Activated CD4-positive, alpha-beta T cell treated with anti-CD3 and anti-CD28 coated beads, Interleukin-2, amount 10 ng/mL, durations not matched to agents 7 days and 5 days (primary cell): ENCODE measurements at regions of chr12 and their contacts with region 1.

Region 1: GRCh38 chr12:110600254-110600653 is 13.7 kb upstream of the TCTN1 start:
- DNase-seq: no peak
- H3K4me3 Mint-ChIP-seq: no peak overlapping the region
- H3K27ac Mint-ChIP-seq: no peak overlapping the region
- H3K4me1 Mint-ChIP-seq: peaks cover 16% of the 10 kb centered on the region
- H3K27me3 Mint-ChIP-seq: no peaks in the 10 kb centered on the region

Region 2: DNA sequence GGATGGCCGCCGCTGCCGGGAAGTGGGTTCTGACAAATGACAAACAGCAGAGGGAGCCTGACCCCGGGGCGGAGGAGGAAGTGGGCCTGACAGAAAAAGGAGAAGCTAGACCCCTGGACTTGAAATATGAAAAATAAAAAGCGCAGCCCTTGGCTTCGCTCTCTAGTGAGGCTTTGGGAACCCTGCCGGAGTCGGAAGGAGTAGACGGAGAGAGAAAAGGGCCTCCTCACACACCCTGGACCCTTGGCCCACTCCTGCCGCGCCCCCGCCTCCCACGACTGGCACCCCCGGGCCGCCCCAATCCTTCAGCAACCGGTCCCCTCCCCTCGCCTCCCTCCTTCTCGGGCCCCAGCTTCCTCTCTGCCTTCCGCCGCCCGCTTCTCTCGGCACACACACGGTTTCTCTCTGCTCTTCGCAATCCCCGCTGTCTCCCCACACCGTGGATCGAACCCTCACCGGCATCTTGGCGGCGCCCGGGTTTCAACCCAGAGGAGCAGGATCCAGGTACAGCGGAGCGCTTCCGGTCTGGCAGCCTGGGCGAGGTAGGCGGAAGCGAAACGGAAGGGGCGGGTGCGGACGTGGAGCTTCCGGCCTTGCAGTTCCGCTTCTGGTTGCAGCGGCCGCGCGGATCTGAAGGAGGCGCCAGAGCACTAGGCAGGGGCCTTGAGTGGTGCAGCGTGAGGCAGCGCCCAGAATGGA is 150.3 kb before region 1 on chr12 and contains the start of gene ARPC3:
- CTCF ChIA-PET with region 1: interaction called, 68 read pairs
- POLR2A ChIA-PET with region 1: interaction called, 7 read pairs
- DNase-seq: peak; percentile 97
- H3K4me3 Mint-ChIP-seq: peak within 1 kb of the TSS; percentile 100
- H3K27ac Mint-ChIP-seq: peak within 1 kb of the TSS; percentile 100
- H3K4me1 Mint-ChIP-seq: peaks cover 49% of the 10 kb centered on the region
- H3K27me3 Mint-ChIP-seq: no peaks in the 10 kb centered on the region
- total RNA-seq, gene ARPC3: 390 to 425 TPM

Region 3: GRCh38 chr12:110508071-110508586 is 92.1 kb before region 1 on chr12:
- CTCF ChIA-PET with region 1: interaction called, 15 read pairs
- POLR2A ChIA-PET with region 1: no interaction called
- DNase-seq: no peak
- H3K4me3 Mint-ChIP-seq: no peak overlapping the region
- H3K27ac Mint-ChIP-seq: no peak overlapping the region
- H3K4me1 Mint-ChIP-seq: peaks cover 4% of the 10 kb centered on the region
- H3K27me3 Mint-ChIP-seq: no peaks in the 10 kb centered on the region

Region 4: DNA sequence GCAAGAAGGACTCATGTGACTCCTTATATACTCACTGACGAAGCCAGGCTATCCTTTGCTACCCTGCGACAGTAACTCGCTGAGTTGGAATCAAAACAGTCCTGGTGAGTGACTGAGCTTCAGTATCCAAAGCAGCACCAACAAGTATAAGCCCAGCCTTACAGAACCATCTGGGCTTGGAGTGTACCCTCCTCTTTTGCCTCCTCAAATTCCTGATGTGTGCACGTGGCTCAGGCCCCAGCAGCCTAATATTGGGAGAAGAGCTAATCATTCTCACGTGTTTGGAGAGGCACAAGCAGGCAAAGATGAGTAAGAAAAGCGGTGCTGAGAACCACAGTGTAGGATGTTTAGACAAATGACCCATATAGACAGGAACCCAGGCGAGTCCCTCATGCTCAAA is 51.6 kb before region 1 on chr12:
- CTCF ChIA-PET with region 1: interaction called, 34 read pairs
- POLR2A ChIA-PET with region 1: no interaction called
- DNase-seq: no peak
- H3K4me3 Mint-ChIP-seq: no peak overlapping the region
- H3K27ac Mint-ChIP-seq: no peak overlapping the region
- H3K4me1 Mint-ChIP-seq: peaks cover 37% of the 10 kb centered on the region
- H3K27me3 Mint-ChIP-seq: no peaks in the 10 kb centered on the region

Region 5: DNA sequence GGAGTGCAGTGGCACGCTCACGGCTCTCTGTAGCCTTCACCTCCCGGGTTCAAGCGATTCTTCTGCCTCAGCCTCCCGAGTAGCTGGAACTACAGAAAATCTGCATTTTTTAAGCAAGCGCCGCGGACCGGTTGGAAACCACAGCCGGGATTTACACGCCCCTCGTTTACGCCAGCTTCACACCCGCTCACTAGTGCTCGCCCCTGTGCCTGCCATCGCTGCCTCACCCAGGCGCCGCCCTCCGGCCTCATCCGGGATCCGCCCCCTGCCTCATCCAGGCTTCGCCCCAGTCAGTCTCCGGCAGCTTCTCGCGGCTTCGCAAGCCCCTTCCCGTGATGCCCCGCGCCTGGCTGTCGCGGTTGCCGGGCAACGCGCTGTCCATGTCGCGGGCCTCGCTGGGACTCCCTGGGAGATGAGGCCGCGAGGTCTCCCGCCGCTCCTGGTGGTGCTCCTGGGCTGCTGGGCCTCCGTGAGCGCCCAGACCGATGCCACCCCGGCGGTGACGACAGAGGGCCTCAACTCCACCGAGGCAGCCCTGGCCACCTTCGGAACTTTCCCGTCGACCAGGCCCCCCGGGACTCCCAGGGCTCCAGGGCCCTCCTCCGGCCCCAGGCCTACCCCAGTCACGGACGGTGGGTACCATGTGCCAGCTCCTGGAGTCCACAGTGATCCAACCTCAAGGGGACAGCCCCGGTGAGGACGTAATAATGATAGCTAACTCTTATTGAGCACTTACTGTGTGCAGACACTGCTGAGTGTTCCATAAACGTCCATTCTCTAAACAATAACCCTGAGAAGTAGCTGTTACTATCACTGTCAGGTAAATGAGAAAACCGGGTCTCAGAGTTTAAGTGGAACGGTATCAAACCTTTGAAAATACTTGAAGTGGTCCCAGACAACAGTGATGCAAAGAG is 13.8 kb after region 1 on chr12 and contains the start of gene TCTN1:
- CTCF ChIA-PET with region 1: interaction called, 14 read pairs
- POLR2A ChIA-PET with region 1: interaction called, 3 read pairs
- DNase-seq: peak; percentile 98
- H3K4me3 Mint-ChIP-seq: peak within 1 kb of the TSS; percentile 83
- H3K27ac Mint-ChIP-seq: peak within 1 kb of the TSS; percentile 93
- H3K4me1 Mint-ChIP-seq: peaks cover 15% of the 10 kb centered on the region
- H3K27me3 Mint-ChIP-seq: no peaks in the 10 kb centered on the region
- total RNA-seq, gene TCTN1: 4.3 to 5.2 TPM